ENCODE measurements at regions of chr5 and their contacts with region 1.

Region 1: GRCh38 chr5:135214897-135215616 is 181.0 kb upstream of the PITX1 start:
- DNase-seq: no peak
- H3K4me3 ChIP-seq: no peak overlapping the region
- H3K27ac ChIP-seq: no peak overlapping the region
- H3K4me1 ChIP-seq: peaks cover 4 to 44% (median 21%) of the 10 kb centered on the region in 3 donors
- H3K27me3 ChIP-seq: no peaks in the 10 kb centered on the region
- CTCF ChIP-seq: no peak
- POLR2A ChIP-seq: no peak

Region 2: GRCh38 chr5:135319928-135320607 is 105.0 kb after region 1 on chr5:
- intact Hi-C with region 1: loop called (anchors 10 kb)
- DNase-seq: no peak
- H3K4me3 ChIP-seq: no peak overlapping the region
- H3K27ac ChIP-seq: no peak overlapping the region
- H3K4me1 ChIP-seq: peaks cover 5 to 14% (median 7%) of the 10 kb centered on the region in 3 donors
- H3K27me3 ChIP-seq: no peaks in the 10 kb centered on the region
- CTCF ChIP-seq: no peak
- POLR2A ChIP-seq: no peak

Measured in esophagus squamous epithelium (tissue), 5 donors.